ENCODE measurements at regions of chr1 and their contacts with region 1.

Region 1: DNA sequence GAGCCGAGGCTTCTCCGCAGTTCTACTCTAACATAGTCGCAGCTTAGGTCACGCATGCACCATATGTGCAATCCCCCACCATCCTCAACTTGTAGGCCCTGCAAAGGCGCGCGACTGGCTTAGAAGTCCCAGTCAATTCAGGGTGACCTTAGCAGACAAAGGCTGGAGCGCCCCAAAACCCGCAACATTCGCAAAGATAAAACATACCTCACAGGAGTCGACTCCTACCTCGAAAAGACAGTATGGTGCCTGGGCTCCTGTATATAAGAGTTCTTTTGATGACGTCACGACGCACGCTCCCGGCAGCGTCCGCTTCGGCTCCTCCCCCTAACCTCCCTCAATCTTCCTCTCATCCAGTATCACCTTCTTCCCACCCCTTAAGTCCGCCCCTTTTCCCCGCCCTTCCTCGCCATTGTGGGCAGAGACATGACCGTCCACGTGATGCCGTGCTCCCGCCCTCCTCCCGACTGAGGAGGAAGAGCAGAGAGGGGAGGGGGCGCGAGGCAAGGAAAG is at the start of gene GAS5:
- DNase-seq: peak; percentile 90 to 100 (median 99)
- ATAC-seq: peak; percentile 75 to 79
- H3K4me3 Mint-ChIP-seq: peak within 1 kb of the TSS; percentile 87 to 99 (median 97)
- H3K27ac Mint-ChIP-seq: peak within 1 kb of the TSS; percentile 95 to 99 (median 98)
- H3K4me1 Mint-ChIP-seq: peaks cover 29 to 82% (median 74%) of the 10 kb centered on the region in 4 donors
- H3K27me3 Mint-ChIP-seq: no peaks in the 10 kb centered on the region
- polyA plus RNA-seq, gene GAS5: 503 to 660 (median 547) TPM

Region 2: GRCh38 chr1:173545688-173546087 is 322.1 kb before region 1 on chr1:
- POLR2A ChIA-PET with region 1: no interaction called
- DNase-seq: no peak
- ATAC-seq: no peak
- H3K4me3 Mint-ChIP-seq: no peak overlapping the region
- H3K27ac Mint-ChIP-seq: no peak overlapping the region
- H3K4me1 Mint-ChIP-seq: peaks cover 9 to 30% (median 23%) of the 10 kb centered on the region in 4 donors
- H3K27me3 Mint-ChIP-seq: no peaks in the 10 kb centered on the region

Region 3: GRCh38 chr1:173714759-173715537 is 152.9 kb before region 1 on chr1 and contains the start of gene KLHL20:
- POLR2A ChIA-PET with region 1: interaction called, 18 read pairs
- DNase-seq: peak; percentile 64 to 93 (median 88)
- ATAC-seq: peak; percentile 97
- H3K4me3 Mint-ChIP-seq: peak within 1 kb of the TSS; percentile 92 to 100 (median 98)
- H3K27ac Mint-ChIP-seq: peak within 1 kb of the TSS; percentile 92 to 98 (median 96)
- H3K4me1 Mint-ChIP-seq: peaks cover 9 to 37% (median 30%) of the 10 kb centered on the region in 4 donors
- H3K27me3 Mint-ChIP-seq: peaks cover 11 to 21% (median 13%) of the 10 kb centered on the region in 5 donors
- polyA plus RNA-seq, gene KLHL20: 21.1 to 27.1 (median 21.9) TPM

Region 4: GRCh38 chr1:174022080-174022975 is 154.5 kb after region 1 on chr1 and contains the start of gene RC3H1:
- POLR2A ChIA-PET with region 1: interaction called, 23 read pairs
- DNase-seq: peak; percentile 73 to 93 (median 84)
- ATAC-seq: peak; percentile 88 to 89
- H3K4me3 Mint-ChIP-seq: peak within 1 kb of the TSS; percentile 96 to 100 (median 99)
- H3K27ac Mint-ChIP-seq: peak within 1 kb of the TSS; percentile 96 to 100 (median 99)
- H3K4me1 Mint-ChIP-seq: peaks cover 17 to 52% (median 41%) of the 10 kb centered on the region in 4 donors
- H3K27me3 Mint-ChIP-seq: no peaks in the 10 kb centered on the region
- polyA plus RNA-seq, gene RC3H1: 5.1 to 7.2 (median 5.2) TPM

Measured in naive thymus-derived CD8-positive, alpha-beta T cell (primary cell).